ENCODE measurements at regions of chr12 and their contacts with region 1.

Region 1: DNA sequence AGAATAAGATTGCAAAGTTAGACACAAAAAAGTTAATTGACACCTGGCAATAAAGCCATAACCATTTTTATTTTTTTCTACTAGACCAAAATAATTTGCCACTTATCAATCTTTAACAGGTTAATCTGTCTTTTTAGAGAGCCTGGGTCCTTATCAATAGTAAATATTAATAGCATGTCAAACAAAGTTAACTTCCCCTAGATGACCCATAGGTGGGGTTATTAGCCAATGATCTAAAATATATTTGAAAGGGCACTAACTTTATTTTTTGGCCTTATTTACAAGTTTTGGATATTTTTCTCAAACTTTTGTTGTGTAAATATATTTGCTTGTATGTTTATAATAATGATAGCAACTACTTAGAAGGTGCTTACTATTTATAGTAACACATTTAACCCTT is 3.9 kb downstream of the ANKRD33 start:
- DNase-seq: no peak
- ATAC-seq: no peak
- H3K4me3 ChIP-seq: no peak overlapping the region
- H3K27ac ChIP-seq: no peak overlapping the region
- H3K4me1 ChIP-seq: peaks cover 4 to 8% of the 10 kb centered on the region in 2 donors
- H3K27me3 ChIP-seq: peaks cover 0 to 6% (median 5%) of the 10 kb centered on the region in 3 donors
- CTCF ChIP-seq: peak in 3 of 5 experiments; percentile 18 to 37 (median 18)
- POLR2A ChIP-seq: no peak

Region 2: DNA sequence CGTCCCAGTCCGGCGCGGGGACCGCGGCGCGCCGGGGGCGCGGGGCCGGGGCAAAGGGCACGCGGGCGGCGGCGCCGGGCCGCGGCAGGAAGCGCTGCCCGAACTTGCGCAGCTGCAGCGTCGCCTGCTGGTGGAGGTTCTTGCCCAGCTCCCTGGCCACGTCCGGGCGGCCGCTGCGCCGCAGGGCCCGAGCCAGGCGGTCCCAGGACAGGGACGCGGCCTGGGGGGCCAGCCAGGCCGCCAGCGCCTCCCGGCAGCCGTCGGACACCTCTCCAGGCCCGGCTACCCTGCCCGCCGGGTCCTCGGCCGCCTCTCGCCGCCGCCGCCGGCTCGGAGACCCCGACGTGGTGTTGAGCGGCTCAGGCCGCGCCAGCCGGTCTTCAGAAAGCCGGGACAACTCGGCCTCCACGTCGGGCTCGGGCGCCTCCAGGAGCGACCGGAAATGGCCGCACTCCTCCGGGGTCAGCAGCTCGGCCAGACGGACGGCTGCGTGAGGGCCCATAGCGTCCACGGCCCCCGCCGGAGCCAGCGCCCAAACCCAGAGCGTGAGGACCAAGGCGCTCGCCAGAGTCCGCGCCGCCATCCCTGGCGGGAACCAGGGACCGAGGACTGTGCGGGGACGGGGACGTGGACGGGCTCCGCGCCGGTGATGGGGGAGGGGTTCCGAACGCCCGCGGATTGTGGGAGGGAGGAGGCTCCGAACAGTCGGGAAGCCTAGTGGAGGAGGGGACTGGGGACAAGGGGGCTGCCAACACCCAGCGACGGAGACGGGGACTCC is 77.3 kb before region 1 on chr12:
- in situ Hi-C with region 1: no loop called
- intact Hi-C with region 1: no loop called
- DNase-seq: peak in 1 of 2 donors; percentile 27
- ATAC-seq: peak; percentile 75 to 77
- H3K4me3 ChIP-seq: peak overlapping the region; percentile 55 to 61 (median 58)
- H3K27ac ChIP-seq: peak overlapping the region; percentile 49 to 80 (median 68)
- H3K4me1 ChIP-seq: no peaks in the 10 kb centered on the region
- H3K27me3 ChIP-seq: peaks cover 0 to 15% (median 12%) of the 10 kb centered on the region in 3 donors
- CTCF ChIP-seq: peak in 4 of 5 experiments; percentile 45 to 67 (median 58)
- POLR2A ChIP-seq: no peak

Region 3: GRCh38 chr12:51970904-51971646 is 79.2 kb after region 1 on chr12:
- in situ Hi-C with region 1: loop called (anchors 5 to 10 kb)
- intact Hi-C with region 1: no loop called
- DNase-seq: no peak
- ATAC-seq: no peak
- H3K4me3 ChIP-seq: no peak overlapping the region
- H3K27ac ChIP-seq: no peak overlapping the region
- H3K4me1 ChIP-seq: peaks cover 38 to 43% of the 10 kb centered on the region in 2 donors
- H3K27me3 ChIP-seq: no peaks in the 10 kb centered on the region
- CTCF ChIP-seq: no peak
- POLR2A ChIP-seq: no peak

Region 4: DNA sequence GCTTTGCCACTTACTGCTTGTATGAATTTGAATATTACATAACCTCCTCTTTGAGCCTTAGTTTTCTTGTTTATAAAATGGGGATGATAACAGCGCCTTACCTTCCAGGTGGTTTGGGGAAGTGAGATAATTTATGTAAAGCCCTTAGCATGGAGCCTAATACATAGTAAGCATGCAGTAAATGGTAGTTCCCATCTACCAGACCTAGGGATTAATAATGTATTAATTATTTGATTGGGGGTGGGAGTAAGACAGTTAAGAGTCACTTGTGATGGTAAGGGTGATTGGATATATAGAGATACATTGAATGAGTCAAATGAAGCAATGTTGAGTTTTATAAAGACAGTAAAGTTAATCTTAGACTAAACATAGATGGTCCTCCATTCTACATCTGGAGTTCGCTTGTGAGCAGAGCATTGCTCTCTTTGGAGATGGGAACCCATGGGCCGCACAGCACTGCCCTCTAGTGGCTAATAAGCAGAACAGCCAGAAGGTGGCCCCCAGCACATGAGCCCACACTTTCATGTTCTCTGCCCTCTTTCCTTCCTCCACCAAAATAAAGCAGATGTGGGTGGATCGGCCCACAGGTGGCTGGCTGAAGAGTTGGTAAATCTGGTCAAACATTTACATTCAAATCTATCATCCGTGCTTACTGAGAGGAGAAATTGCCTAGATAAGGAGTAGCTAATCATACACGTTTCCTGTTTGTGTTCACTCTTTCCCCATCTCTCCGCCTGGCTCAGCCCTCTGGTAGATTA is 88.4 kb after region 1 on chr12:
- in situ Hi-C with region 1: loop called (anchors 5 to 10 kb)
- intact Hi-C with region 1: loop called (anchors 1 kb)
- DNase-seq: peak; percentile 49 to 52
- ATAC-seq: peak; percentile 89 to 93
- H3K4me3 ChIP-seq: no peak overlapping the region
- H3K27ac ChIP-seq: no peak overlapping the region
- H3K4me1 ChIP-seq: no peaks in the 10 kb centered on the region
- H3K27me3 ChIP-seq: no peaks in the 10 kb centered on the region
- CTCF ChIP-seq: peak; percentile 90 to 99 (median 92)
- POLR2A ChIP-seq: no peak